ENCODE measurements at regions of chr18 and their contacts with region 1.

Region 1: DNA sequence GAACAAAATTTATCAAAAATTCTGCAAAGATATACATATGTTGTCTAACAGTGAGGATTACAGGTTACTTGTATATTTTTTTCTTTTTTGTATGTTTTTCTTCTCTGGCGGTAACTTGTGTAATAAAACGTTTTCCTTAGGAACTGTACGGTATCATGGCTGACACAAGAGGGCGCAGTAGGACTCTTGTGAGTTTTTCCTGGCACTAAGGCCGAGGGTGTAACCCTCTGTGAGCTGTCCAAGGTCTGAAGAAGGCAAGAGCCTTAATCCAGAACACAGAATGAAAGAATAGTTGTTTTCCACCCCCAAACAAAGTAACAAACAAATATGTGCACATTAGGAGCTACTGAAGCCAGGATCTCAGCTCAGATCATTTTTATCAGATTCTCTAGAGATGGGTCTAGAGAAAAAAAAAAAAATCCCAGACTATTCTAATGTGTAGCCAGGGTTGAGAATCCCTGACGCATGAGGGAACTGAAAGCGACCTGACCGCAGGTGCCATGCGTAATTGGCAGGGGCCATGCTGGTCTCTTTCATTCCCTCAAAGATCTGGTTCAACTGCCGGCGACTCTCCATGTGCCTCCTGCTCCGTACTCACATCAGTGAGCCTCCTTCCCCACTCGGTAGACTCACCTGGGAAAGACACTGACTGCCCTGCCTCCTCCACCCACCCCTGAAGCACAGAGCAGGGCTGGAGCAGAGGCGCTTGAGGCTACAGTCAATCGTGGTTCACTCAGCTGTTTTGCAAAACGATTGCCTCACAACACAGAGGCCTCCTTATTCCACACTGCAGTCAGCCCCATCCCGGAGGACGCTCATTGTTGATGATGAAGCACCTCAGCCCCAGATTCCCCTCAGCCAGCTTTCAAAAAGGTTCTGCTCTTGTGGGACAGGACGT is 26.9 kb downstream of the TMEM200C start:
- DNase-seq: peak; percentile 48
- ATAC-seq: peak; percentile 90

Region 2: GRCh38 chr18:5503740-5504139 is 364.7 kb before region 1 on chr18:
- intact Hi-C with region 1: no loop called
- DNase-seq: no peak
- ATAC-seq: no peak

Region 3: DNA sequence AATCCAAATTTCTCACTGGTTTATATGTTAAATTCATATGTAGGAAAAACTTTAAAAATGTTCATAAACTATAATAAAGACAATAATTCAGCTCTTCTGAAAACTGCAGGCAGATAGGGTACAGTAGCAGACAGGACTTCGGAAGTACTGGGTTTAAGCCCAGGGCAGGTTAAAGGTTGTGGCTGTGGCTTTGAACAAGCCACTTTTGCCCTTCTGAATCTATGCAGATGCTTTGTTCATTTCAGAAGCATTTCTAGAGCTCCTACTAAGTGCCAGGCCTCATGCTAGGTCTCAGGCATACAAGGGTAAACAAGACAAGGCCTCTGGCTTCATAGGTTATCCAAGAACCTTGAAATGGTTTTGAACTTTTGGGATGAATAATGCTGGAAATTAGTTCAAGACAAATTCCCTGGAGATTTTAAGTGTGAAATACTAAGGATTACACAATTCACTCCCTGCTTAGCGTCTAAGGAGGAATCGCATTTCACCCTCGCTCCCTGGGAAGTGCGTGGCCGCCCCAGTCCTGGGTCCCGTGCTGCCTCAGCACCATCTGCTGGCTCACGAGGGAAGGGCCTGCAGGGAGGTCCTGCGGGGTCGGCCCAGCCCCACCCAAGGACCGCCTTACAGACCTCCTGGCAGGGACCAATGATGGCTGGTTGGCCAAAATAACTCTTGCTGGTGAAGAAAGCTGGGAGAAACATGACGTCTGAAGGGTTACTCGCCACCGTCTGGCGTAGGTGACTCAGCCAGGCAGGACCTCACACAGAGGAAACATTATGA is 613.9 kb after region 1 on chr18:
- intact Hi-C with region 1: loop called (anchors 5 kb)
- DNase-seq: peak; percentile 85
- ATAC-seq: peak; percentile 99

Measured in Right ventricle myocardium superior (tissue), 1 donor.